ENCODE measurements at regions of chr5 and their contacts with region 1.

Region 1: GRCh38 chr5:134527146-134527960 is 1.9 kb downstream of the JADE2 start:
- DNase-seq: peak; percentile 43 to 86 (median 60)
- ATAC-seq: peak; percentile 31
- H3K4me3 ChIP-seq: peak overlapping the region; percentile 81
- H3K4me3 Mint-ChIP-seq: peak overlapping the region; percentile 99
- H3K27ac ChIP-seq: peak overlapping the region; percentile 62 to 99
- H3K27ac Mint-ChIP-seq: peak overlapping the region; percentile 100
- H3K4me1 ChIP-seq: peaks cover 64% of the 10 kb centered on the region
- H3K4me1 Mint-ChIP-seq: peaks cover 59% of the 10 kb centered on the region
- H3K27me3 ChIP-seq: no peaks in the 10 kb centered on the region
- H3K27me3 Mint-ChIP-seq: no peaks in the 10 kb centered on the region
- CTCF ChIP-seq: peak; percentile 76

Region 2: GRCh38 chr5:134370871-134371833 is 156.2 kb before region 1 on chr5 and contains the start of gene UBE2B:
- CTCF ChIA-PET with region 1: interaction called, 3 read pairs
- POLR2A ChIA-PET with region 1: interaction called, 145 read pairs
- intact Hi-C with region 1: loop called (anchors 1 kb)
- DNase-seq: peak; percentile 93 to 99 (median 97)
- ATAC-seq: peak; percentile 73
- H3K4me3 ChIP-seq: peak within 1 kb of the TSS; percentile 100
- H3K4me3 Mint-ChIP-seq: peak within 1 kb of the TSS; percentile 96
- H3K27ac ChIP-seq: peak within 1 kb of the TSS; percentile 97 to 98
- H3K27ac Mint-ChIP-seq: peak within 1 kb of the TSS; percentile 97
- H3K4me1 ChIP-seq: peaks cover 37% of the 10 kb centered on the region
- H3K4me1 Mint-ChIP-seq: peaks cover 68% of the 10 kb centered on the region
- H3K27me3 ChIP-seq: no peaks in the 10 kb centered on the region
- H3K27me3 Mint-ChIP-seq: peaks cover 4% of the 10 kb centered on the region
- CTCF ChIP-seq: no peak
- total RNA-seq, gene UBE2B: 225 to 228 TPM

Region 3: DNA sequence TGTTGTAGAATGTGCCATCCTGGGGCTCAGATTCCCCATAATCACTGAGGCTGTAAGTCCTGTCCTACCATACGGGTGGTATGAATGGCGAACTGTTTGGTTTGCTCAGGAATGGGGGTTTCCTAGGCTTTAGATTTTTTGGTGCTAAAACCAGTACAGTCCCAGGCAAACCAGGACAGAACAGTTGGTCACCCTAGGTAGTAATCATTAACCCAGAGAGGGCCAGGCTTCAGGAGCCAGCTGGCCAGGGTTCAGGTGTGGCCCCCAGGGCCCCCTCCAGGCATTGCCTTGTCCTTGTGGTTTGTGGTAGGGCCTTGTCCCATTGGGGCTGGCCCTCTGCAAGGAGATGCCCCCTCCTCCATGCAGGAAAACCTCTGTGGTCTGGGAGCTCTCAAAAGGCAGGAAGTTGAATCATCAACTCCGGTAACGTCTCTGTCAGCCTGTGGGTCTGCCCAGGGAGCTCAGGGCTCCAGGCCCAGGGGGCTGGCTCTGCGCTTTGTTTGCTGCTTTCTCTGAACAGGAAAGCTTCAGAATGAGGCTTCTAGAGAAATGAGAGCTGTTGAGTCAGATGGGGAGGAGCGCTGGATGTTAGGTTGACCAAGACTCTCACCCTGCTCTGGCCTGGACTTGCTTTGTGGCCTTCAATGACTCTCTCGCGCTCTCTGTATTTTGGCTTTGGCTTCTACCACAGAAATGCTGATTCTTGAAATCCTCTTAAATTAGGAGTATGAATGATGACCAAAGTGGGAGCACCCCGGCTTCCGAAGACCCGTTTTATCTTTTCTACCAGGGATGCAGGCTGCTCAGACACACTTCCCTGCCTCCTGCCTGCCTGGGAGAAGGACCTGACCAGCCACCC is 24.0 kb before region 1 on chr5:
- CTCF ChIA-PET with region 1: no interaction called
- POLR2A ChIA-PET with region 1: interaction called, 36 read pairs
- intact Hi-C with region 1: no loop called
- DNase-seq: peak; percentile 11 to 80 (median 56)
- ATAC-seq: peak; percentile 87
- H3K4me3 ChIP-seq: no peak overlapping the region
- H3K4me3 Mint-ChIP-seq: peak overlapping the region; percentile 34
- H3K27ac ChIP-seq: peak overlapping the region in 1 of 2 donors; percentile 58
- H3K27ac Mint-ChIP-seq: peak overlapping the region; percentile 84
- H3K4me1 ChIP-seq: peaks cover 27% of the 10 kb centered on the region
- H3K4me1 Mint-ChIP-seq: peaks cover 15% of the 10 kb centered on the region
- H3K27me3 ChIP-seq: no peaks in the 10 kb centered on the region
- H3K27me3 Mint-ChIP-seq: no peaks in the 10 kb centered on the region
- CTCF ChIP-seq: no peak

Region 4: DNA sequence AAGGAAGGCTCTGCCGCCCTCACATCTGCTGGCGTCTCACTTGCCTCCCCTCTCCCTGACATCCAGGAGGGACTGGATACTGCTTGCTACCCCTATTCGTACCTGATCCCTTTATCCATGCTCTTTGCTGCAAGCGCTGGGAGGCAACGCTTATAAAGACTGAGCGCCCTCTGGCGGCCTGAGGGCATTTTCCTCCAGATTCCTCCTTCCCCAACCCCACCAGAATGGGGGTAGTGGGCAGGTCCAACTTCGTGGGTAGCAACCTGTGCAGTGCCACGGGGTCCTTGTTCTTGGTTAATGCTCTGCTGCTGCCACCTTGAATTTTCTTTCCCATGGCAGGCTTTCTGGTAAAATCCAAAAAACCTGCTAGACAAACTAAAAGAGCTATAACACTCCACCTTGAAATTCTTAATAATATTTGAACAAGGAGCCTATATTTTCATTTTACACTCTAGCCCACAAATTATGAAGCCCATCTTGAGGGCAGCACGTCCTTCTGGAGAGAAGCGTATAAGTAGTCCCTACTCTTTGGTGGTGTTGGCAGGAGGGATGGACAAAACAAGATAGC is 50.5 kb after region 1 on chr5:
- CTCF ChIA-PET with region 1: interaction called, 7 read pairs
- POLR2A ChIA-PET with region 1: interaction called, 4 read pairs
- intact Hi-C with region 1: loop called (anchors 1 to 2 kb)
- DNase-seq: peak; percentile 63 to 86 (median 72)
- ATAC-seq: peak; percentile 85
- H3K4me3 ChIP-seq: no peak overlapping the region
- H3K4me3 Mint-ChIP-seq: no peak overlapping the region
- H3K27ac ChIP-seq: no peak overlapping the region
- H3K27ac Mint-ChIP-seq: peak overlapping the region; percentile 82
- H3K4me1 ChIP-seq: peaks cover 9% of the 10 kb centered on the region
- H3K4me1 Mint-ChIP-seq: peaks cover 7% of the 10 kb centered on the region
- H3K27me3 ChIP-seq: no peaks in the 10 kb centered on the region
- H3K27me3 Mint-ChIP-seq: no peaks in the 10 kb centered on the region
- CTCF ChIP-seq: peak; percentile 91

Region 5: DNA sequence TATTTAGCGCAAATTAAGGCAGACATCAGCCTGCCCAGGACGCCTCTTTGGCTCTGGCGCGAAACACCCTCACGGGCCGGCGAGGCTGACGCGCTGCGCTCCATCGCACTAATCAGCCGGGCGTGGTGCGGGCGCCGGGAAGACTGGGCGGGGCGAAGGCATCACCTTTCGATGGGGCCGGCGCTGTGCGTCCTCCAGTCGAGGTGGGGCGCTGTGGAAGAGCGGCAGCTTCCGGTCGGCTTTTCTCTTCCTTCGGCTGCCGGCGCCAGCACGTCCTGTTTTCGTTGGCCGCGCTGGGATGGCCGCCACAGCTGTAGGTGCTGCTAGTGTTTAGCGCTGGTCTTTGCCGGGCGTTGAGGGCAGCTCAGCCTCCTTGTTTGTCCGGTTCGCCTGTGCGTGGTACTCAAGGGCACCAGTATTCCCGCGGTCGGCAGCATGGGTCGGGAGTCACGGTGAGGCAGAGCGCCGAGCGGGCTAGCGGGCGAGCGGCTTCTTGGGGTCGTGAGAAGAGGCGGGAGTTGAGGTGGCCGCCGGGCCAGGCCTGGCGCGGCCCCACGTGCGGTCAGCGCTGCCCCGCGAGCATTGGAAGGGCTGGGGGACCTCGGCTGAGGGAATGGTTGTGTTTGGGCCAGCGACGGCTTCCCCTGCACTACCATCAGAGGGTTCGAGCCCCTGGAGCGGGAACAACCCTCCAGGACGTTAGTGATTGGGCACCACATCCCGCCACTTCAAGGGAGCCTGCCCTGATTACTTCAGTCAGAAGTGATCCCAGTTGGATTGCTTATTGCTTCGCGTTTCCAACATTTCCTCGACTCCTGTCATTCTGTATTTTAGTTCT is 231.4 kb after region 1 on chr5 and contains the start of gene DDX46:
- CTCF ChIA-PET with region 1: no interaction called
- POLR2A ChIA-PET with region 1: interaction called, 3 read pairs
- intact Hi-C with region 1: loop called in 1 of 2 experiments (anchors 10 kb)
- DNase-seq: peak; percentile 89 to 97 (median 93)
- ATAC-seq: peak; percentile 99
- H3K4me3 ChIP-seq: peak within 1 kb of the TSS; percentile 91
- H3K4me3 Mint-ChIP-seq: peak within 1 kb of the TSS; percentile 100
- H3K27ac ChIP-seq: peak within 1 kb of the TSS; percentile 74 to 76
- H3K27ac Mint-ChIP-seq: peak within 1 kb of the TSS; percentile 95
- H3K4me1 ChIP-seq: peaks cover 22% of the 10 kb centered on the region
- H3K4me1 Mint-ChIP-seq: peaks cover 44% of the 10 kb centered on the region
- H3K27me3 ChIP-seq: no peaks in the 10 kb centered on the region
- H3K27me3 Mint-ChIP-seq: no peaks in the 10 kb centered on the region
- CTCF ChIP-seq: peak; percentile 89
- total RNA-seq, gene DDX46: 35.5 to 35.8 TPM

Measured in CD4-positive, alpha-beta T cell (primary cell).